Activated CD4-positive, alpha-beta memory T cell treated with anti-CD3 and anti-CD28 coated beads for 36 hours (primary cell): ENCODE measurements at regions of chr11 and their contacts with region 1.

Region 1: DNA sequence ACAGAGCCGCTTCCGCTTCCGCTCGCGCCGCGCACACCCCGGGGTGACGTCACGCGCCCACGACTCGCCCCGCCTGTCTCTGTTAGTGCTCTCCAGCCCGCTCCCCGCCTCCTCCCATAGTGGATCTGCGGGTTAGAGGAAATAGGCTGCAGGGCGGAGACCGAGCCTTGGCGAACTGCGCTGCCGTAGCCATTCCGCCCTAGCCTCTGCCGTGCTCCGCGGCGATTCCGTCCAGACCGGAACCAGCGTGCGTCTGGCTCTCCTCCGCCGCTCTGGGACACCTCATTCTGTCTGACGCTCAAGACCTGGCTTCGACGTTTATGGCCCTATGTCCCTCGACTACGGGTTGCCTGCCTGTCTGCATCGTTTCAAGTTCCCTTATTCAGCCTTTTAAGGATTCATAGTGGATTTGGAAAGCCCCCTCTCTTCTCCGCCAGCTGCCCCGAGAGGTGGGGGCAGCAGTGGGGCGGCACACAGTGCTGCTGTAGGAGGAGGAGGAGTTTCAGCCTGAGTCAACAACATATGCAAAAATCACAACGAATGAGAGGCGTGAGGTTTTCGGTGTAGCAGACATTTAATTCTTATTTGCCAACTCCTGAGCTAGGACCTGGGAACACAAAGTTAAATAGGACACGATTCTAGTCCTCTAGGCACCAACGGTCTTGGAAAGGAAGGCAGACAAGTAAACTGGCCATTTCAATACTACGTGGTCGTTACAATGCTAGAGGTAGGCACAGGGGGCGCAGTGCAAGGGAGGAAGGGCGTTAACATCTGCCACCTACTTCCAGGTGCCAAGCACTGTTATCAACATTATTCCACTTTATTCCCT is at the start of gene TAF10:
- DNase-seq: peak; percentile 96
- H3K4me3 Mint-ChIP-seq: peak within 1 kb of the TSS; percentile 86
- H3K27ac Mint-ChIP-seq: peak within 1 kb of the TSS; percentile 92
- H3K4me1 Mint-ChIP-seq: peaks cover 10% of the 10 kb centered on the region
- H3K27me3 Mint-ChIP-seq: no peaks in the 10 kb centered on the region
- total RNA-seq, gene TAF10: 158 to 165 TPM

Region 2: DNA sequence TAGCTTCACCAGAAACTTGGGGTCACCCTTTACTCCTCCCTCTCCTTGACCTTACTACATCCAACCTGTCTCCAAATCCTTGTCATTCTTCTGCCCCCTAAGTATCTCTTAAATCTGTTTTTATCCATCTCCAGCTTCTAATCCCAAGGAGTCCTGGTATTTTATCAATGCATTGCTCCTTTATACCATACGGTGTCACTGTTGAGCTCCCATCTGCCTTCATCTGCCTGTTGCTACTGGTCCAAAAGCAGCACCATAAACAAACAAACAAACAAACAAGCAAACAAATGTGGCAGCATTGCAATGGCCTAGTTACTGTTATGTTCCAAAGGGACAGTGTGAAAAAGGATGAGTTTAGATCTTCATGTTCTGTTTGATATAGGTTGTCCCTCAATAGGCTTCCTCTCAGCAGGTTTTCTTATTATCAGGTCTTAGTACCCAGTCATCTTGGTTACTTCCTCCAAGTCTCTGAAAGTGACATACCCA is 81.1 kb before region 1 on chr11:
- CTCF ChIA-PET with region 1: interaction called, 15 read pairs
- POLR2A ChIA-PET with region 1: no interaction called
- intact Hi-C with region 1: no loop called
- DNase-seq: no peak
- H3K4me3 Mint-ChIP-seq: no peak overlapping the region
- H3K27ac Mint-ChIP-seq: no peak overlapping the region
- H3K4me1 Mint-ChIP-seq: peaks cover 11% of the 10 kb centered on the region
- H3K27me3 Mint-ChIP-seq: no peaks in the 10 kb centered on the region

Region 3: DNA sequence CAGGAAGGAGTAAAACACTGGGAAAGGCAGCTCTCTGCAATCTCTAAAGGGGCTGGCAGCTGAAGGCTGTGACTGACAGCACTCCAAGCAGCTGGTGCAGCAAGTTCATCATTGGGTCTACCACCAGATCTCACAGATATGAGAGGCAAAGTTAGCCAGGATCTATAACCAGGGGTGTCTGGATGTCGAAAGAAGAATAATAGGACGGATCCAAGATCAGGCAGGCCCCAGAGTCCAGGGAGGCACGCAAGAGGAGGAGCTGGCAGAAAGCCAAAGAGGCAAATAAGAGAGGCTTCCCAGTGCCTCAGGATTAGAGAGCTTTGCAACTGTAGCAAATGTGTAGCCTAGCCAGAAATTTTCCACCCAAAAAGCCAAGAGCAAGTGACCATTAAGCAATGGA is 553.5 kb after region 1 on chr11:
- CTCF ChIA-PET with region 1: no interaction called
- POLR2A ChIA-PET with region 1: no interaction called
- intact Hi-C with region 1: no loop called
- DNase-seq: no peak
- H3K4me3 Mint-ChIP-seq: no peak overlapping the region
- H3K27ac Mint-ChIP-seq: no peak overlapping the region
- H3K4me1 Mint-ChIP-seq: no peaks in the 10 kb centered on the region
- H3K27me3 Mint-ChIP-seq: peaks cover 3% of the 10 kb centered on the region

Region 4: GRCh38 chr11:7672960-7673723 is 1060.7 kb after region 1 on chr11 and contains the start of gene CYB5R2:
- CTCF ChIA-PET with region 1: no interaction called
- POLR2A ChIA-PET with region 1: no interaction called
- intact Hi-C with region 1: loop called (anchors 10 kb)
- DNase-seq: peak; percentile 38
- H3K4me3 Mint-ChIP-seq: peak within 1 kb of the TSS; percentile 63
- H3K27ac Mint-ChIP-seq: no peak within 1 kb of the TSS
- H3K4me1 Mint-ChIP-seq: peaks cover 31% of the 10 kb centered on the region
- H3K27me3 Mint-ChIP-seq: peaks cover 33% of the 10 kb centered on the region
- total RNA-seq, gene CYB5R2: 4.4 to 4.7 TPM